Naive thymus-derived CD8-positive, alpha-beta T cell (primary cell): ENCODE measurements at regions of chr7 and their contacts with region 1.

Region 1: GRCh38 chr7:17946591-17946990 is 6.3 kb upstream of the SNX13 start:
- DNase-seq: peak in 1 of 10 donors; percentile 10
- ATAC-seq: peak; percentile 38 to 65
- H3K4me3 Mint-ChIP-seq: peak overlapping the region; percentile 42 to 80 (median 62)
- H3K27ac Mint-ChIP-seq: peak overlapping the region in 3 of 10 donors; percentile 10 to 77 (median 44)
- H3K4me1 Mint-ChIP-seq: peaks cover 0 to 18% (median 10%) of the 10 kb centered on the region in 4 donors
- H3K27me3 Mint-ChIP-seq: peaks cover 0 to 6% (median 0%) of the 10 kb centered on the region in 5 donors

Region 2: GRCh38 chr7:17029150-17029549 is 917.4 kb before region 1 on chr7:
- POLR2A ChIA-PET with region 1: interaction called, 14 read pairs
- DNase-seq: no peak
- ATAC-seq: no peak
- H3K4me3 Mint-ChIP-seq: peak overlapping the region in 1 of 10 donors; percentile 6
- H3K27ac Mint-ChIP-seq: peak overlapping the region in 1 of 10 donors; percentile 56
- H3K4me1 Mint-ChIP-seq: peaks cover 0 to 33% (median 0%) of the 10 kb centered on the region in 4 donors
- H3K27me3 Mint-ChIP-seq: peaks cover 0 to 2% (median 0%) of the 10 kb centered on the region in 5 donors

Region 3: GRCh38 chr7:17830206-17830605 is 116.4 kb before region 1 on chr7:
- POLR2A ChIA-PET with region 1: no interaction called
- DNase-seq: no peak
- ATAC-seq: no peak
- H3K4me3 Mint-ChIP-seq: no peak overlapping the region
- H3K27ac Mint-ChIP-seq: no peak overlapping the region
- H3K4me1 Mint-ChIP-seq: no peaks in the 10 kb centered on the region
- H3K27me3 Mint-ChIP-seq: no peaks in the 10 kb centered on the region

Region 4: DNA sequence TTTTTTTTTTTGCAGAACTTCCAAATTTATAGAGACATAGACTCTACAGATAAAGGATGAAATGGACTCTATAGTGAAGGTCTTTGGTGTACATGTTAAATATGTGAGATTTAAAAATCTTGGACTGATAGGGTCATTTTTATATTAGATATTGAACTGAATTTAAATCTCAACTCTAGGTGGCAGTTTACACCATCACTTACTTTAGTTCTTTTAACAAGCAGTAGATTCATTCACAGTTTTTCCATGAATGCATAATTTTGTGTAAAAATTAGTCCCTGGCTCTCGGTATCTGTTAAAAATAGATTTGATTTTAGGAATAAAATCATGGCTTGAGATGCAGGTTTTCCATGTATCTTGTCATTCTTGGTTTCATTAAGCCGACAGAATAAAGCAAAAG is 24.8 kb after region 1 on chr7:
- POLR2A ChIA-PET with region 1: no interaction called
- DNase-seq: no peak
- ATAC-seq: no peak
- H3K4me3 Mint-ChIP-seq: no peak overlapping the region
- H3K27ac Mint-ChIP-seq: no peak overlapping the region
- H3K4me1 Mint-ChIP-seq: no peaks in the 10 kb centered on the region
- H3K27me3 Mint-ChIP-seq: peaks cover 0 to 6% (median 5%) of the 10 kb centered on the region in 5 donors